HEK293T (cell line): ENCODE measurements at regions of chr17 and their contacts with region 1.

Region 1: DNA sequence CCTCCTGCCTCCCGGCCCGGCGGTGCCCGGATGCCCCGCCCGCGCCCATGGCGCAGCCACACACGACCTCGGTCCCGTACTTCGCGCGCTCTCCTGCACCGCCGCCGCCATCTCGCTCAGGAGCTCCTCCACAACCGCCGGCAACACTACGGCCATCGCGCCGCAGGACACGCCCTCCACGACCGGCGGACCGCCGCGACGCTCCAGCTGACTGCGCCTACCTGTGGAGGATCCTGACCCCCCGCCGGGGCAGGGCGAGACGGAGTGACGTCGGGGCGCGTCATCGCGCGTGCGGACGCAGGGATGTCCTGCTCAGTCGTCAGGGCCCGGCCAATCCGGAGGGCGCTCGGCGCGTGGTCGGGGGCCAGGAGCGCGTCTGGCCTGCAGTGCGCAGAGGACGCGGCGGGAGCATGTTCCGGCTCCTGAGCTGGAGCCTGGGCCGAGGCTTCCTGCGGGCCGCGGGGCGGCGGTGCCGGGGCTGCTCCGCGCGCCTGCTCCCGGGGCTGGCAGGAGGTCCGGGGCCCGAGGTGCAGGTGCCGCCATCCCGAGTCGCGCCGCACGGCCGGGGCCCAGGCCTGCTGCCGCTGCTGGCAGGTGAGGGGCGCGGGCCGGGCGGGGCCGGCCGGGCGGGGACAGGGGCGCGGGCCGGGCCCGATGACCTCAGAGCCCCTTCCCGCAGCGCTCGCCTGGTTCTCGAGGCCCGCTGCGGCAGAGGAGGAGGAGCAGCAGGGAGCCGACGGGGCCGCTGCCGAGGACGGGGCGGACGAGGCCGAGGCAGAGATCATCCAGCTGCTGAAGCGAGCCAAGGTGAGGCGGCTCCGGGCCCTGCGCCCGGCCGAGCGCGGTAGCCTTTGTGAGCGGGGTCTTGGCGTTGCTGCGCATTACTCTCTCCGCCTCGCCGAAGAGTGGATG is at the starts of genes TTC19 and ZSWIM7:
- DNase-seq: peak; percentile 95

Region 2: DNA sequence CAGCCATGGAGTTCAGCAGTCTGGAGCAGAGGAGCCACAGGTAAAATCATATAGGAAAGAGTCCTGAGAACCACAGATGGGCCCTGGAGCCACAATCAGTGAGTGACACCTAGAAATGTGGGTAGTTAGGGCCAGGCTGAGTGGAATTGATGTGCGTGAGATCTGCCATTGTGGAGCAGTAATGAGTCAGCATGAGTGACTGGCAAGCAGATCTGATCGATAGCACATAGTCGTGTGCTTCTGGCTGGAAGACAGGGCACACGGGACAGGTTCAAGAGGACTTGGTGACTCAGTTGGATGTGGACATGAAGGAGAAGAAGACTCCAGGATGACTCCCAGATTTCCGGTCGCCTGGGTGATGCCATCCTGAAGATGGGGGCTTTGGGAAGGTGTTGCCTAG is 42.5 kb before region 1 on chr17:
- CTCF ChIA-PET with region 1: no interaction called
- POLR2A ChIA-PET with region 1: interaction called, 12 read pairs
- DNase-seq: no peak

Region 3: GRCh38 chr17:15966183-15966878 is 33.4 kb before region 1 on chr17:
- CTCF ChIA-PET with region 1: interaction called, 5 read pairs
- POLR2A ChIA-PET with region 1: interaction called, 17 read pairs
- DNase-seq: no peak

Region 4: GRCh38 chr17:16013943-16014407 is 14.3 kb after region 1 on chr17:
- CTCF ChIA-PET with region 1: interaction called, 4 read pairs
- POLR2A ChIA-PET with region 1: interaction called, 34 read pairs
- DNase-seq: peak; percentile 43

Region 5: DNA sequence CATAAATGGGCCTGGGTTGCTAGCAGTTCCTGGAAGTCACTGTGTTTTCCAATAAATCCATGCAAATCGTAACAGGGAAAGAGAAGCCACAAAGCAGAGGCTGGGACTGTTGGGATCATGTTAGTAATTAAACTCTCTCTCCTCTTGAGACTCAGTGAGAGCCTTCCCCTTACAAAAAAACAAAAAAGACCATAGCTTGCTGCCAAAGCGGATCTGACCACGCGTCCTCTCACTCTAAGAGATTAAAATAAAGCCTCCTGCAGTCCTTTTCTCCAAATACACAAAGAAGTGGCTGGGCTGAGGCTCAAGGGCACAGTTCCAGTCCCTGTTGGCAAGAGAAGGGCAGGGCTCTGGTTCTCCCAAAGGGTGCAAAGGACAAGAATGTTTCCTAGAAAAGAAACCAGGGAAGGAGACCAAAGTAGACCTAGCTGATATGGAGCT is 255.8 kb after region 1 on chr17:
- CTCF ChIA-PET with region 1: no interaction called
- POLR2A ChIA-PET with region 1: no interaction called
- DNase-seq: no peak